PC-9 (cell line): ENCODE measurements at regions of chr15 and their contacts with region 1.

Region 1: GRCh38 chr15:62619526-62619925 is 423.0 kb upstream of the TPM1 start:
- DNase-seq: no peak
- H3K4me3 ChIP-seq: no peak overlapping the region
- H3K27ac ChIP-seq: no peak overlapping the region
- H3K4me1 ChIP-seq: no peaks in the 10 kb centered on the region
- H3K27me3 ChIP-seq: no peaks in the 10 kb centered on the region
- CTCF ChIP-seq: no peak

Region 2: GRCh38 chr15:62606376-62607113 is 13.0 kb before region 1 on chr15:
- CTCF ChIA-PET with region 1: interaction called, 3 read pairs
- POLR2A ChIA-PET with region 1: interaction called, 10 read pairs
- intact Hi-C with region 1: no loop called
- DNase-seq: peak; percentile 37 to 94
- H3K4me3 ChIP-seq: no peak overlapping the region
- H3K27ac ChIP-seq: peak overlapping the region; percentile 62
- H3K4me1 ChIP-seq: peaks cover 46% of the 10 kb centered on the region
- H3K27me3 ChIP-seq: no peaks in the 10 kb centered on the region
- CTCF ChIP-seq: no peak